ENCODE measurements at regions of chr5 and their contacts with region 1.

Region 1: GRCh38 chr5:43105369-43106289 is 15.1 kb upstream of the ZNF131 start:
- DNase-seq: peak; percentile 87
- H3K4me3 ChIP-seq: peak overlapping the region; percentile 45 to 64
- H3K27ac ChIP-seq: peak overlapping the region; percentile 56 to 65
- H3K4me1 ChIP-seq: peaks cover 0 to 2% of the 10 kb centered on the region in 2 experiments; a peak in 1 of 4 replicates
- H3K27me3 ChIP-seq: no peaks in the 10 kb centered on the region
- CTCF ChIP-seq: peak; percentile 100
- EP300 ChIP-seq: no peak
- RAD21 ChIP-seq: peak; percentile 81

Region 2: GRCh38 chr5:43040287-43041098 is 65.1 kb before region 1 on chr5 and contains the start of gene ANXA2R:
- CTCF ChIA-PET with region 1: interaction called, 27 read pairs
- POLR2A ChIA-PET with region 1: no interaction called
- DNase-seq: peak; percentile 62
- H3K4me3 ChIP-seq: peak within 1 kb of the TSS; percentile 58 to 72
- H3K27ac ChIP-seq: peak within 1 kb of the TSS; percentile 77 to 93; a peak in 3 of 4 replicates
- H3K4me1 ChIP-seq: peaks cover 0 to 24% of the 10 kb centered on the region in 2 experiments; a peak in 1 of 4 replicates
- H3K27me3 ChIP-seq: no peaks in the 10 kb centered on the region
- CTCF ChIP-seq: peak; percentile 70
- EP300 ChIP-seq: no peak
- RAD21 ChIP-seq: peak; percentile 72
- polyA plus RNA-seq, gene ANXA2R: 1.7 and 1.9 TPM in 2 replicates

Region 3: DNA sequence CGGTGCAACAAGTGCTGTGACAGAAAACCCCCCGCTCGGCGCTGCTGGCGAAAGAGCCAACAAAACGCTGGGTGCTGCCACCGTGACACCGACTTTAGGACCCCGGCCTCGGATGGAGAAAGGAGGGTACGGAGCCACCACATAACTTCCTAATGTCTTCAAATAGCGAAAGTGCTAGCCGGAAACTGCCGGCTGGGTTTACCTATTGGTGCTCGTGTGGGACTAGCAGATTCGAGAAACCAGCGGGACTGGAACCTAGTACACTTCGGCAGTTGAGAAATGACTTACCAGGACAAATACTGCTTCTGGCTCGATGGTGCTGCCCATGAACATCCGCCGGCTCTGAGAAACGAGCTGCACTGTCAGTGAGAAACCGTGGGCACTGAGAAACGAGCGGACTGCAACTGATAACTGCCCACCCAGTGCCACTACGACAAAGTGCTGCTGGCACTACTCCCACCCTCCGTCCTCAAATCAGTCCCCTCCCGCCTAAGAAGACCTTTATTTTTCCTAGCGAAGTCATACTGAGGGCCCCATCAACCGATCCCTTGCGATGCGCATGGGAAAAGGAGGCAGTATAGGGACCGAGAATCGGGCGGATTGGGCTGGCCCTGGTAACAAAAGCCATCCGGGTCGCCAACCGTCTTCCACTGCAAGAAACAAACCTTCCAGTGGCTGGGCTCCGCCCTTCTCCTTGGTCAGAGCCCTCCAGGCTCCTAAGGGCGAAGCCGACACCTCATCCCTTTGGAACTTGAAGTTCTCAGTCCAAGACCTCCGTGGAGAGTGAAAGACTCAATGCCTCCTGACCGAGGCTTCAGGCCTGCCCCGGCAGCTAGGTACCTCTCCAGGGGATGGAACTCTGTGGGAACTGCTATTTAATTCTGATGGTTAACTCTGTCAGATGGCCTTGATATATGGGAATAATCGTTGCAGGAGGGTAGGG is 38.6 kb before region 1 on chr5:
- CTCF ChIA-PET with region 1: interaction called, 17 read pairs
- POLR2A ChIA-PET with region 1: no interaction called
- DNase-seq: peak; percentile 68
- H3K4me3 ChIP-seq: peak overlapping the region; percentile 80 to 84
- H3K27ac ChIP-seq: peak overlapping the region; percentile 90 to 97
- H3K4me1 ChIP-seq: peaks cover 11 to 13% of the 10 kb centered on the region in 2 experiments; a peak in 3 of 4 replicates
- H3K27me3 ChIP-seq: no peaks in the 10 kb centered on the region
- CTCF ChIP-seq: no peak
- EP300 ChIP-seq: peak; percentile 83 to 97; a peak in 3 of 4 replicates
- RAD21 ChIP-seq: no peak

Region 4: DNA sequence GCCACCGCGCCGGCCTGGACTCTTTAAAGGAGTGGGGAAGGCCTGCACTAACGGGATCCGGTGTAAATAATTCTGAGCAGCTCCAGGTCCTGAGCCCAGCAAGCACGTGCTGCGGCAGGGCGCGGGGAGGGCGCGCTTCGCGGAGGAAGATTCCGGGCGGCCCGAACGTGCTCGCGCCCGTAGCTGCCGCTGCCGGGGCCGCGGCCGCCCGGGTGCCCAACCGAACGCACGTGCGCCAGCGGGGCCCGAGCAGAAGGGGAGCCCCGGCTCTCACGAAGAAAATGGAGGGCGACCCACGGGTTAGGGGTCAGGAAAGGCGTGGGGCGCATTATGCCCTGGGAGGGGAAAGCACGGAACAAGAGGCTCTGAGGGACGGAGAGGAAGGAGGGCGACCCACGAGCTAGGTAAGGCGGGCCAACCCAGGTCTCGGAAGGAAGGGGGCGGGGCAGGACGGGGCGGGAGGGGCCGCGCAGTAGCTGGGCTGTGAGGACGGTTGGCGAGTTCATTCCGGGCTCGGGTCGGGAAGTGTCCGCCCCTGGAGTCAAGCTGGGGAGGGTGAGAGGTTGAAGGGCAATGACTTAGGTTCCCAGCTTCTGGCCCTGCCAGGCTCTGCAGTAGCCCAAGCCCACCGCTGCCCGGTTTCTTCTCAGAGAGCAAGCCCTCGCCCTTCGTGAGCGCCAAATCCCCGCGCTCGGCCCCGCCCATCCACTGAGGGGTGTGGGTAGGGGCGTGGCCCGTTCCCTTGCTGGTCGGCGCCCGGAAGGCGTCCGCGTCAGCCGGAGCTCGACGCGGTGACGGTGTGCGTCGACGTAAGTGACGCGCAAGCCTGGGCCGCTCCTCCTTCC is 15.3 kb after region 1 on chr5 and contains the start of gene ZNF131:
- CTCF ChIA-PET with region 1: interaction called, 25 read pairs
- POLR2A ChIA-PET with region 1: interaction called, 4 read pairs
- DNase-seq: peak; percentile 95
- H3K4me3 ChIP-seq: peak within 1 kb of the TSS; percentile 87 to 99
- H3K27ac ChIP-seq: peak within 1 kb of the TSS; percentile 92 to 96
- H3K4me1 ChIP-seq: peaks cover 15 to 16% of the 10 kb centered on the region in 2 experiments; a peak in 3 of 4 replicates
- H3K27me3 ChIP-seq: no peaks in the 10 kb centered on the region
- CTCF ChIP-seq: no peak
- EP300 ChIP-seq: no peak
- RAD21 ChIP-seq: no peak
- polyA plus RNA-seq, gene ZNF131: 17.2 and 22.9 TPM in 2 replicates

Region 5: GRCh38 chr5:43313035-43313853 is 207.6 kb after region 1 on chr5 and contains the start of gene HMGCS1:
- CTCF ChIA-PET with region 1: interaction called, 11 read pairs
- POLR2A ChIA-PET with region 1: no interaction called
- DNase-seq: peak; percentile 94
- H3K4me3 ChIP-seq: peak within 1 kb of the TSS; percentile 79 to 92
- H3K27ac ChIP-seq: peak within 1 kb of the TSS; percentile 81 to 88
- H3K4me1 ChIP-seq: peaks cover 13 to 22% of the 10 kb centered on the region in 2 experiments; a peak in 3 of 4 replicates
- H3K27me3 ChIP-seq: peaks cover 3% of the 10 kb centered on the region; the same call in 1 of the 2 replicates
- CTCF ChIP-seq: peak; percentile 13; the same call in 1 of the 2 replicates
- EP300 ChIP-seq: no peak
- RAD21 ChIP-seq: 0 out of 2 replicates have a peak, but pooled peaks have one; percentile 6
- polyA plus RNA-seq, gene HMGCS1: 8.2 and 11.3 TPM in 2 replicates